ENCODE measurements at regions of chr15 and their contacts with region 1.

Region 1: DNA sequence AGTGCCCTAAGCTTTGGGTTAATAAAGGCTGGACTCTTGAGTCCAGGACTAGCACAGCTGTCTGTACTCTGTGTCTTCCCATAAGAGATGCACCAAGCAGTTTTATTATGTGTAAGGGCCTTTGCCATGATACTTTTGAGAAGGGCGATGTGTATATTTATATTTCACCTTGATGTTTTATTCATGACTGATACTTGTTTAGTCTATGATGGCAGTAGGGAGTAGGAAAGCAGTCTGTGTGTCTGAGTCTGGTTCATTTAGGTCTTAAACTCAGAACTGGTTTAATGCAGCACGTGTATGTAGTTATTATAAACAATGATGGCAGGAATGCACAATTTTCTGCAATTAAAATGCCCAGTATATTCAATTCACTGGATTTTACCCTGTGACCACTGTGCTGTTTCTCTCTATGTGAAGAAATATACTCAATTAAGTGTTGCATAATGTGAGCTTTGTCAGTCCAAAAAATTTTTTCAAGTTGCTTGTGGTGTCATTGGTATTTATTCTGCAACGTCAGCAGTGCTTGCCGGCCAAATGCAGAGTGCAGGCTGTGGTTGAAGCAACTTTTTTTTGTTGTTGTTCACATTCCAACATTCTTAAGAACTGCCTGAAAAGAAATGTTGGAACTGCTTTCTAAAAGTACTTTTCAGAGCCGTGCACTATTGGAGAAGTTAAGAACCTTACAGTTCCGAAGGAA is 423.7 kb upstream of the SEMA6D start:
- DNase-seq: no peak
- ATAC-seq: no peak
- H3K4me3 ChIP-seq: no peak overlapping the region
- H3K27ac ChIP-seq: no peak overlapping the region
- H3K4me1 ChIP-seq: no peaks in the 10 kb centered on the region
- H3K27me3 ChIP-seq: no peaks in the 10 kb centered on the region
- CTCF ChIP-seq: no peak
- POLR2A ChIP-seq: no peak
- RAD21 ChIP-seq: no peak

Region 2: DNA sequence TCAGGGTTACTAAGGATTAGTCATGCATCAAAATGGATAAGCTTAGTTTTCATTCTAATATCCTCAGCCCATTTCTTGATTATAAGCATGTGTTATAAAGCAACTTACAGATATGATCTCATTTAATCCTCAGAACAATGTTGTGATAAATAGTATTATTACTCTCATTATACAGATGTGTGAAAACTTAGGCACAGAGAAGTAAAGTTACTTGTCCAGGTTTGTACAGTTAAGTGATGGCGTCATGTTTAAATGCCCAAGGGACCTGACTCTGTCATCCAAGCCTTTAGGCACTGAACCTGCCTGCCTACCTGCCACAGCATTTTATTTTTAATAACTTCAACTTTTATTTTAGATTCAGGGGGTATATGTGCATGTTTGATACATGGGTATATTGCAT is 49.3 kb before region 1 on chr15:
- CTCF ChIA-PET with region 1: no interaction called
- POLR2A ChIA-PET with region 1: no interaction called
- RAD21 ChIA-PET with region 1: no interaction called
- intact Hi-C with region 1: loop called (anchors 5 kb)
- DNase-seq: no peak
- ATAC-seq: no peak
- H3K4me3 ChIP-seq: no peak overlapping the region
- H3K27ac ChIP-seq: no peak overlapping the region
- H3K4me1 ChIP-seq: no peaks in the 10 kb centered on the region
- H3K27me3 ChIP-seq: no peaks in the 10 kb centered on the region
- CTCF ChIP-seq: no peak
- POLR2A ChIP-seq: no peak
- RAD21 ChIP-seq: no peak